WTC11 (cell line): ENCODE measurements at regions of chr9 and their contacts with region 1.

Region 1: DNA sequence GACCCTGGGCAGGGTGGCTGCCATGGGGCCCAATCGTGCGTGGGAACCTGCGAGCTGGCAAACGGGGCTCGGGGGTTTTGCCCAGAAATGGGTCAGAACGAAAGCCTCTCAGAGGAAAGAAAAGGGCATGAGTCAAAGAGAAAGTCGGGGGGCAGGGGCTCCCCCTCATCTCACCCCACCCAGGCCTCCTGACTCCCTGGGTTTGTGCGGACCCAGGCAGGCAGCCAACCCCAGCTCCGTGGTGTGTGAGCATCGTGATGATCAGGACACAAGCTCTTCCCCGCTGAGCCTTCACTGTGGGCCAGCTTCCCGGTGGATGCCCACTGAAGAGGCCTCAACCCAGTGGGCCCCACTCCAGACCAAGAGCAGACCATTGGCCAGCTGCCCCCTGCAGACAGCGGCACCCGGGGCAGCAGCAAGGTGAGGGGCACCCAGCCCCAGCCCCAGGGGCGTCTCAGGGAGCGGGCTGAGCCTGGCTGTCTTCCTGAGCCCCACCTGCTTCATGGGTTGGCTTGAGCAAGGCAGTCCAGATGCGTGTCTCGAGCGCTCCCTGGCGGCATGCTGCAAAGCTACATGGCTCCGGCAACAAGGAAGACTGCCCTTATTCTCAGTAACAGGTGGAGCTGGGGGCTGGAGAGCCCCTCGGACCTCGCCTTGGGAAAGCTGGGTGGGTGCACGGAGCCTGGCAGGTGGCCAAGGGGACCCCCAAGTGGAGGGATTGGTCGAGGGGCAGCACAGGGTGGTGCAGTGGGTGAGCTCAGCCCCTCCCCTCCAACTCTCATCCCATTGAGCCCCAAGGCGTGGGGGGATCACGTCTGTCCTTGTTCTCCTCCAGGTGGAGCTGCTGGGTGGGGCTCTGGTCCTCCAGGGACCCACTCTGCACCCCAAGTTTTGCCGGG is 3.2 kb upstream of the FUT7 start:
- DNase-seq: peak; percentile 90
- ATAC-seq: peak; percentile 94
- H3K4me3 Mint-ChIP-seq: no peak overlapping the region
- H3K27ac Mint-ChIP-seq: no peak overlapping the region
- H3K4me1 Mint-ChIP-seq: no peaks in the 10 kb centered on the region
- H3K27me3 Mint-ChIP-seq: no peaks in the 10 kb centered on the region
- CTCF ChIP-seq: peak; percentile 83

Region 2: DNA sequence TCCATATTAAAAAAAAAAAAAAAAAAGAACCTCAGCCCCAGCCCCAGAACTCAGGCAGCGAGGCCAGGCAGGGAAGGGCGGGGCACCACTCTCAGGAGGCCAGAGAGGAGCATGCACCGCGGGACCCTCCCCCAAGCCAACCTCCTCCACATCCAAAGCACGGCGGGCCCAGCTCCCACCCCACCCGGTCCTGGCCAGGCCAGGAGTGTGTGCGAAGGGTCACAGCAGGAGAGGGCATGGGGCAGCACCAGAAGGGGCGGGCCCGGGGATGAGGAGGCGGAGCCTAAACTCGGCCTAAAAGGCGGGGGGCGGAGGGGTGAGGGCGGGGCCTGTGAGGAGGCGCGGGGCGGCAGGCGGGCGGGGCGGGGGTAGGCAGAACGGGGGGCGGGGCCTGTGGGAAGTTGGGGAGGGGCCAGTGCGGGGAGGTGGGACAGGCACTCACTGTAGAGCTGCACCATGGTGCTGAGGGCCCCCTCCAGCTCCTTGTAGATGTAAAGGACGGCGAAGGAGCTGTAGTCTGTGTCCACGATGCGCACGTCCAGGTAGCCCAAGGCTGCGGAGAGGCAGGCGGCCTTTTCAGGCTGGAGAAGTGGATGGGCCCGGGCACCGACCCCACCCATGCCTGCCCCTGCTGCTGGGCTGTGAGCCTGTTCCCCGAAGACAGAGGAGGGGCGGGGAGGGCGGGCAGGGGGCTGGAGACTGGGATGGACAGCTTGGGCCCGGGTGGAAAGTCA is 272.0 kb before region 1 on chr9:
- CTCF ChIA-PET with region 1: interaction called, 10 read pairs
- POLR2A ChIA-PET with region 1: no interaction called
- DNase-seq: peak; percentile 96
- ATAC-seq: peak; percentile 83
- H3K4me3 Mint-ChIP-seq: peak overlapping the region; percentile 67
- H3K27ac Mint-ChIP-seq: peak overlapping the region; percentile 80; the same call in 1 of the 2 replicates
- H3K4me1 Mint-ChIP-seq: peaks cover 11% of the 10 kb centered on the region
- H3K27me3 Mint-ChIP-seq: peaks cover 13% of the 10 kb centered on the region
- CTCF ChIP-seq: no peak

Region 3: GRCh38 chr9:136885950-136886578 is 149.0 kb before region 1 on chr9 and contains the start of gene TRAF2:
- CTCF ChIA-PET with region 1: interaction called, 16 read pairs
- POLR2A ChIA-PET with region 1: no interaction called
- DNase-seq: peak; percentile 98
- ATAC-seq: peak; percentile 97
- H3K4me3 Mint-ChIP-seq: peak within 1 kb of the TSS; percentile 76
- H3K27ac Mint-ChIP-seq: peak within 1 kb of the TSS; percentile 60; the same call in 1 of the 2 replicates
- H3K4me1 Mint-ChIP-seq: peaks cover 9% of the 10 kb centered on the region
- H3K27me3 Mint-ChIP-seq: no peaks in the 10 kb centered on the region
- CTCF ChIP-seq: no peak
- total RNA-seq, gene TRAF2: 55.0 to 62.5 TPM (median 61.3 TPM) in 3 replicates

Region 4: DNA sequence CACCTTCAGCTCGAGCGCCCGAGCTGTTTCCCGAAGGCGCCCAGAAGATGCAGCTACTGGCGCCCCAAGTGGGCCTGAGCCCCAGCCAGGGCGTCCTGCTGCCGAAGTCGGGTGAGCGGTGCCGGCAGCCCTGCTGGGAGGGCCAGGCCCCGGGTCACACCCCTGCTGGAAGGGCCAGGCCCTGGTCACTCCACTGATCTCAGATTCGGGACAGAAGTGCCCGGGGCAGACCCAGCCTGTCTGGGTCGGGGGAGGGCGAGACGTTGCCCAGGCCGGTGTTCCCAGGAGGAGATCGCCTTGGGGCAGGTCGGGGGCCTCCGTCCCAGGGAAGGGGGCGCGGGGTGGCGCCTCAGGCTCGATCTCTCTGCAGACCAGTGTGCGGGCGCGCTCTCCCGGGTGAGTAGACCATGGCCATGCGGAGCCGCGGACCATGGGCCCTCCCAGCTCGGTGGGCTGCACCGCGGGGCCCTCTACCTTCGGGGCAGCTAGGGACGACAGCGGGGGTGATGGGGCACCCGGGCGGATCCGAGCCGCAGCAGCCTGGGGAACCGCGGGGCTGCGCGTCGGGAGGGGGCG is 50.0 kb before region 1 on chr9:
- CTCF ChIA-PET with region 1: interaction called, 24 read pairs
- POLR2A ChIA-PET with region 1: no interaction called
- DNase-seq: no peak
- ATAC-seq: peak; percentile 41
- H3K4me3 Mint-ChIP-seq: peak overlapping the region; percentile 49
- H3K27ac Mint-ChIP-seq: no peak overlapping the region
- H3K4me1 Mint-ChIP-seq: no peaks in the 10 kb centered on the region
- H3K27me3 Mint-ChIP-seq: peaks cover 38% of the 10 kb centered on the region
- CTCF ChIP-seq: no peak

Region 5: GRCh38 chr9:137021979-137022619 is 13.0 kb before region 1 on chr9:
- CTCF ChIA-PET with region 1: interaction called, 38 read pairs
- POLR2A ChIA-PET with region 1: interaction called, 3 read pairs
- DNase-seq: peak; percentile 98
- ATAC-seq: peak; percentile 96
- H3K4me3 Mint-ChIP-seq: no peak overlapping the region
- H3K27ac Mint-ChIP-seq: no peak overlapping the region; the same call in 1 of the 2 replicates
- H3K4me1 Mint-ChIP-seq: no peaks in the 10 kb centered on the region; the same call in 1 of the 2 replicates
- H3K27me3 Mint-ChIP-seq: peaks cover 2% of the 10 kb centered on the region; the same call in 1 of the 2 replicates
- CTCF ChIP-seq: no peak

Region 6: GRCh38 chr9:137070201-137070905 is 35.2 kb after region 1 on chr9 and contains the start of gene SAPCD2:
- CTCF ChIA-PET with region 1: interaction called, 91 read pairs
- POLR2A ChIA-PET with region 1: interaction called, 3 read pairs
- DNase-seq: peak; percentile 88
- ATAC-seq: peak; percentile 84
- H3K4me3 Mint-ChIP-seq: peak within 1 kb of the TSS; percentile 71
- H3K27ac Mint-ChIP-seq: peak within 1 kb of the TSS; percentile 95
- H3K4me1 Mint-ChIP-seq: peaks cover 34% of the 10 kb centered on the region
- H3K27me3 Mint-ChIP-seq: no peaks in the 10 kb centered on the region
- CTCF ChIP-seq: no peak
- total RNA-seq, gene SAPCD2: 52.0 to 67.0 TPM (median 53.6 TPM) in 3 replicates

Region 7: DNA sequence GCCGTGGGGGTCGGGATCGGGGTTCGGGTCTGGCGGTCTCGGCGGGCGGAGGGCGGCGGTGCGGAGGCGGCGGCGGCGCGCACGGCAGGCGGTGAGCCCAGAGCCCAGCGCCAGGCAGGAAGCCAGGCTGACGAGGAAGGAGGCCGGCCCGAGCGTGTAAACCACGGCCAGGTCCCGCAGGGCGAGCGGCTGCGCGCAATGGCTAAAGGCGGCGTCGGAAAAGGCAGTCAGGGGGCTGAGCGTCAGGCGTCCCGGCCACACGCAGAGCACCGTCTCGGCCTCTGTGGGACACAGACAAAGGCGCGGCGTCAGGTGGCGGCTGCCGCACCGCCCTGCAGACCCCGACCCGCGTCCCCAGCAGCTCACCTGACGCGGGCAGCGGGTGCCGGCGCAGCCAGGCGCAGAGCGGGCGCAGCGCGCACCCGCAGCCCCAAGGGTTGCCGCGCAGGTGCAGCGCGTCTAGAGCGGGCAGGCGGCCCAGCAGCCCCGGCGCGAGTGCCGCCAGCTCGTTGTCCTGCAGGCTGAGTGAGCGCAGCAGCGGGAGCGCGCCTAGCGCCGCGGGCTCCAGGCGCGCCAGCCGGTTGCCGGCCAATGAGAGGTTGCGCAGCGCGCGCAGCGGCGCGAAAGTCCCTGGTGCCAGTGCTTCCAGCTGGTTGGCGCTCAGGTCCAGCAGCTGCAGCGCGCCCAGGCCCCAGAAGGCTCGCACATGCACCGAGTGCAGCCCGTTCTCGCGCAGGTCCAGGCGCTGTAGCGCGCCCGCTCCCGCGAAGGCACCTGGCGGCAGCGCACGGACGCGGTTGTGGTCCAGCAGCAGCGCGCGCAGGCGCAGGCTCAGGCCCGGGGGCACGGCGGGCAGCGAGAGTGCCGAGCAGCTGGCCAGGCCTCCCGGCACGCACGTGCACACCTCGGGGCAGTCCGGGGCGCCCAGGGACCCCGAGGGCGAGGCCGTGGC is 134.1 kb after region 1 on chr9:
- CTCF ChIA-PET with region 1: interaction called, 16 read pairs
- POLR2A ChIA-PET with region 1: no interaction called
- DNase-seq: peak; percentile 81
- ATAC-seq: peak; percentile 61
- H3K4me3 Mint-ChIP-seq: peak overlapping the region; percentile 62
- H3K27ac Mint-ChIP-seq: no peak overlapping the region
- H3K4me1 Mint-ChIP-seq: peaks cover 6% of the 10 kb centered on the region
- H3K27me3 Mint-ChIP-seq: peaks cover 64% of the 10 kb centered on the region
- CTCF ChIP-seq: no peak